ENCODE measurements at regions of chr12 and their contacts with region 1.

Region 1: DNA sequence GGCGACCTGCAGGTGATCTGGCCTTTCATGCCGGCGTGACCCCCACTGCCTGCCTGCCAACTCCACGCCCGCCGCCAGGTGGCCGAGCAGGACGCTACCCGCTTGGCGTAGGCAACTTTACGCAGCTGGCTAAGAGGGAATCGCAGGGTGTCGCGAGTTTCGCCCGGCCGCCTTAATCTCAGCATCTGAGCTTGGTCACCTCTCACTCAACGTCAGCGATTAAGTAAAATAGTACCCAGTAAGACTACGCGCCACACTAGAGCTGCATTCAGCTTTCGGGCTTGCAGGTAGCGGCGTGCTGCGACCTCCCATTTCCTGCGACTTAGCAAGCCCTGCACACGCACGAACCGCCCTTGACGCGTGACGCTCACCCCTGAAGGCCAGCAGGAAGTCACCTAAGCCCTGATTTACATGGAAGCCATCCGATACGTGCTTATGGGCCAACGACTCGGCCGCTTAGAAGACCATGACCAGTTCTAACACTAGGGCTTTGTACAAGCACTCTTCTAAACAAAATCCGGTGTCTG is 33.2 kb downstream of the WBP11 start:
- DNase-seq: peak; percentile 92
- ATAC-seq: peak; percentile 61

Region 2: GRCh38 chr12:14803011-14803829 is 33.2 kb after region 1 on chr12 and contains the starts of genes C12orf60 and WBP11:
- intact Hi-C with region 1: loop called (anchors 2 kb)
- DNase-seq: peak; percentile 95
- ATAC-seq: peak; percentile 100
- total RNA-seq, gene C12orf60: 2.0 TPM
- total RNA-seq, gene WBP11: 48.0 TPM